ENCODE measurements at regions of chr9 and their contacts with region 1.

Region 1: GRCh38 chr9:22446950-22447617 is 460 bp downstream of the DMRTA1 start:
- DNase-seq: peak; percentile 72
- H3K4me3 ChIP-seq: peak overlapping the region; percentile 40 to 83 (median 64)
- H3K27ac ChIP-seq: peak overlapping the region; percentile 83 to 92 (median 89)
- H3K4me1 ChIP-seq: peaks cover 0 to 18% (median 5%) of the 10 kb centered on the region in 4 donors
- H3K27me3 ChIP-seq: no peaks in the 10 kb centered on the region
- CTCF ChIP-seq: no peak
- EP300 ChIP-seq: no peak
- POLR2A ChIP-seq: no peak

Region 2: GRCh38 chr9:22244141-22245011 is 202.7 kb before region 1 on chr9:
- intact Hi-C with region 1: loop called (anchors 10 kb)
- DNase-seq: no peak
- H3K4me3 ChIP-seq: no peak overlapping the region
- H3K27ac ChIP-seq: no peak overlapping the region
- H3K4me1 ChIP-seq: no peaks in the 10 kb centered on the region
- H3K27me3 ChIP-seq: no peaks in the 10 kb centered on the region
- CTCF ChIP-seq: no peak
- EP300 ChIP-seq: no peak
- POLR2A ChIP-seq: no peak

Region 3: DNA sequence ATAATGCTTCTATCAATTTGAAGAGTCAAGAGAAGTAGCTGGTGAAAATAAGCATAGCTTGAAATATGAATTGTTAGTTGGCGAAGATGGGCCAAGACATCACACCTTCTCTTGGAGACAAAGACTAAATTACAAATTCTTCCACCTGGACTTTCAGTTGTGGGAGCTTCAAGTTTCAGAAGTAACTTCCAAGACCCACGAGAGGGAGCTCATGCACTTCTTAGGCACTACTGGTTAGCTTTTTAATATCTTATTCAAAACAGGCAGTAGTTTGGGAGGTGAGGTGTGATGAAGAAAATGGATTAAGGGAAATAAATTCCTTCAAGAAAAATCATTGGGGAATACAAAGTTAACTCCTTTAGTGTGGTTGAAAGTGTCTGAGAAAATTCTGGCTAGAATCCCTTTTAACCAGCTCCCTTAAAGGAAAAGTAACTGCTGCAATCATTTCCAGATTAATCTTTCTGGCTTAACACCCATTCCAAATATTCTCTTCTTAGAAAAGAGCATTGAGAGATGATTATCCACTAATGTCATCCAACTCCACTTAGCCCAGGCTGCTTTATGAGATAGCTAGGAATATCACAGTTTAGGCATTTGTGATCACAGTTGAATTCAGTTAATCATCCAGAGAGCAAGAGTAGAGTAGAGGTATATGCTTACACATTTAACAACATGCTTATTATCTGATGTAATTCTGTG is 139.9 kb before region 1 on chr9:
- intact Hi-C with region 1: loop called (anchors 2 kb)
- DNase-seq: no peak
- H3K4me3 ChIP-seq: no peak overlapping the region
- H3K27ac ChIP-seq: no peak overlapping the region
- H3K4me1 ChIP-seq: no peaks in the 10 kb centered on the region
- H3K27me3 ChIP-seq: no peaks in the 10 kb centered on the region
- CTCF ChIP-seq: peak in 1 of 4 experiments; percentile 57
- EP300 ChIP-seq: no peak
- POLR2A ChIP-seq: no peak

Measured in sigmoid colon (tissue), 7 donors.